ENCODE measurements at regions of chr18 and their contacts with region 1.

Region 1: DNA sequence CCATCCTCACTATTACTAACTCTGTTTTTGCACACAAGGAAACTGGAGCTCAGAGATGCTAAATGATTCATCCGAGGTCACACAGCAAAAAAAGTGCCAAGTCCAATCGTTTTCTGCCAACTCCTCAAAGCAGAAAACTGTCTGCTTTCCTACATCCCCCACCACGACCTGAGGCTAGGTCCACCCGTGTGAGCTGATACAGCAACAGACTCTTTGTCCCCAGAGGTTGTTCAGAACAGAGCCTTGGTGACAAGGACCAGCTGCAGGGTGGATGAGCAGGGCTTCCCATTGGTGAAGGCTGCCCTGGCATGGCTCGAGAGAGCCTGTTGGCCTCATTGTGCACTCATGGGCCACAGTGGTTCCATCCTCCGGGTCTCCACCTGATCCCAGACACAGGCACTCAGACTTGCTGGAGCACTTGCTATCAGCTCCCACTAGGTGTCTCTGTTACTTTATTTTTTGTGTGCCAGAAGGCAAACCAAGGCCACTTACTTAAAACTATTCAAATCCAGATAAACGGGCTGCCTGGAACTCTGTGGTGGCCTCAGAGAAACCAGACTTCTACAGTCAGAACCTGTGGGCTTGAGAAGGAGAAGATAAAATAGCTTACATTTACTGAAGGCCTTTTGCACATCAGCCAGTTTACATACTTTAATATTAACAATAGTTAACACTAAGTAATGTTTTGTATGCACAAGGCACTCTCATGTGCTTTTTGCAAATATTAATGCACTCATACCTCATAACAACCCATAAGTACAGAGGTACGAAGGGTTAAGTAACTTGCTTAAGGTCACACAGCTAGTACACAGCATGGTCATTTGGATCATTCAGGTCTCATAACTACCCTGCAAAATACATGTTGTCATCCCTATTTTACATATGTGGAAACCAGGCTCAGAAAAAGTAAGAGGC is 62.9 kb upstream of the CTIF start:
- DNase-seq: peak; percentile 78
- H3K4me3 ChIP-seq: no peak overlapping the region
- H3K27ac ChIP-seq: no peak overlapping the region
- H3K4me1 ChIP-seq: peaks cover 2% of the 10 kb centered on the region
- H3K27me3 ChIP-seq: peaks cover 6 to 11% of the 10 kb centered on the region in 2 experiments
- CTCF ChIP-seq: peak; percentile 80 to 86
- POLR2A ChIP-seq: no peak

Region 2: GRCh38 chr18:48605408-48605845 is 129.5 kb after region 1 on chr18:
- CTCF ChIA-PET with region 1: interaction called, 45 read pairs
- POLR2A ChIA-PET with region 1: interaction called, 4 read pairs
- dilution Hi-C with region 1: no loop called
- intact Hi-C with region 1: loop called (anchors 1 kb)
- DNase-seq: peak; percentile 48
- H3K4me3 ChIP-seq: no peak overlapping the region
- H3K27ac ChIP-seq: no peak overlapping the region
- H3K4me1 ChIP-seq: no peaks in the 10 kb centered on the region
- H3K27me3 ChIP-seq: no peaks in the 10 kb centered on the region
- CTCF ChIP-seq: peak; percentile 45 to 62
- POLR2A ChIP-seq: no peak

Region 3: GRCh38 chr18:48639772-48640432 is 164.0 kb after region 1 on chr18:
- CTCF ChIA-PET with region 1: interaction called, 12 read pairs
- POLR2A ChIA-PET with region 1: no interaction called
- dilution Hi-C with region 1: no loop called
- intact Hi-C with region 1: no loop called
- DNase-seq: no peak
- H3K4me3 ChIP-seq: no peak overlapping the region
- H3K27ac ChIP-seq: no peak overlapping the region
- H3K4me1 ChIP-seq: peaks cover 6% of the 10 kb centered on the region
- H3K27me3 ChIP-seq: no peaks in the 10 kb centered on the region
- CTCF ChIP-seq: peak; percentile 25 to 35
- POLR2A ChIP-seq: no peak

Measured in endothelial cell of umbilical vein (primary cell).